ENCODE measurements at regions of chr4 and their contacts with region 1.

Region 1: GRCh38 chr4:173270312-173271027 is 63.7 kb downstream of the HMGB2 start:
- DNase-seq: no peak
- CTCF ChIP-seq: no peak

Region 2: GRCh38 chr4:173002830-173003561 is 267.5 kb before region 1 on chr4:
- CTCF ChIA-PET with region 1: no interaction called
- POLR2A ChIA-PET with region 1: no interaction called
- DNase-seq: no peak
- CTCF ChIP-seq: no peak

Region 3: DNA sequence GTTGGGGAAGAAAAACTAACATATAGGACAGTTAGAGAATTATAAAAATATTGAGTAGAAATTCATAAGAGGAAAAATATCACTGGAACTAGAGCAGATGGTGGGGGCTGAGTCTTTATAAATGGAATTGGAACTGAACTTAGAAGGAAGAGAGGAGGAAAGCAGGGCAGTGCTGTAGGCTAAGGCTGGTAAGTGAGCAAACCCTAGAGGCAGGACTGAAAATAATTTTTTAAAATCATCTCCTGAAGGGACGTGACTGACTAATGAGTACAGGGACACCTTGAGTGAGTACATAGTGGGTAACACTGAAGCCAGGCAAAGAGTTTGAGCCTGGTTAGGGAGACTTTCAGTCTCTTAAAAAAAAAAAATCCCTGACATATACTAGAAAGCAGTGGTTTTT is 38.6 kb before region 1 on chr4:
- CTCF ChIA-PET with region 1: no interaction called
- POLR2A ChIA-PET with region 1: no interaction called
- DNase-seq: no peak
- CTCF ChIP-seq: no peak

Region 4: GRCh38 chr4:173280998-173281397 is 10.5 kb after region 1 on chr4:
- CTCF ChIA-PET with region 1: interaction called, 11 read pairs
- POLR2A ChIA-PET with region 1: no interaction called
- DNase-seq: no peak
- CTCF ChIP-seq: no peak

Region 5: GRCh38 chr4:173346074-173346473 is 75.6 kb after region 1 on chr4:
- CTCF ChIA-PET with region 1: no interaction called
- POLR2A ChIA-PET with region 1: no interaction called
- DNase-seq: no peak
- CTCF ChIP-seq: no peak